Left ventricle myocardium superior (tissue), 1 donor: ENCODE measurements at regions of chr3 and their contacts with region 1.

Region 1: DNA sequence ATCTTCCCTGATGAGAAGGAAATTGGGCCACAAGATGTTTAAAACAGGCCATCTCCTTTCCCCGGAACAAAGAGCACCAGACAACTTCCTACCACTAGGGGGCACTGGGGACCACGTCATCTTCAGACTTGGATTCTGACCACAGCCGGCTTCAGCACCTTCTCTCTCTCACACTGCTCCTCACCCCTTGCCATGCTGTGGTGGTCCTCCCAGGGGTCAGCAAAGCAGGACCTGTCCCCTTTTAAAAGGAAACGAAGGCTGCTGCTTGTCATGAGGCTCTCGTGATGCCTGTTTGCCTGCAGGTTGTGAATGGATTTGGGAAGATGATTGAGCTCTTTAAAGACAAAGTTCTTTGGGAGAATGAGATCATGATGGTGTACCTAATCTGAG is 16.2 kb downstream of the RFT1 start:
- DNase-seq: peak; percentile 77
- ATAC-seq: peak; percentile 85

Region 2: GRCh38 chr3:53195602-53196574 is 81.9 kb after region 1 on chr3:
- intact Hi-C with region 1: loop called (anchors 2 kb)
- DNase-seq: peak; percentile 78
- ATAC-seq: peak; percentile 76

Region 3: GRCh38 chr3:53311882-53312281 is 197.9 kb after region 1 on chr3:
- intact Hi-C with region 1: no loop called
- DNase-seq: no peak
- ATAC-seq: peak; percentile 69

Region 4: GRCh38 chr3:53650424-53650823 is 536.4 kb after region 1 on chr3:
- intact Hi-C with region 1: no loop called
- DNase-seq: no peak
- ATAC-seq: no peak